ENCODE measurements at regions of chr7 and their contacts with region 1.

Region 1: DNA sequence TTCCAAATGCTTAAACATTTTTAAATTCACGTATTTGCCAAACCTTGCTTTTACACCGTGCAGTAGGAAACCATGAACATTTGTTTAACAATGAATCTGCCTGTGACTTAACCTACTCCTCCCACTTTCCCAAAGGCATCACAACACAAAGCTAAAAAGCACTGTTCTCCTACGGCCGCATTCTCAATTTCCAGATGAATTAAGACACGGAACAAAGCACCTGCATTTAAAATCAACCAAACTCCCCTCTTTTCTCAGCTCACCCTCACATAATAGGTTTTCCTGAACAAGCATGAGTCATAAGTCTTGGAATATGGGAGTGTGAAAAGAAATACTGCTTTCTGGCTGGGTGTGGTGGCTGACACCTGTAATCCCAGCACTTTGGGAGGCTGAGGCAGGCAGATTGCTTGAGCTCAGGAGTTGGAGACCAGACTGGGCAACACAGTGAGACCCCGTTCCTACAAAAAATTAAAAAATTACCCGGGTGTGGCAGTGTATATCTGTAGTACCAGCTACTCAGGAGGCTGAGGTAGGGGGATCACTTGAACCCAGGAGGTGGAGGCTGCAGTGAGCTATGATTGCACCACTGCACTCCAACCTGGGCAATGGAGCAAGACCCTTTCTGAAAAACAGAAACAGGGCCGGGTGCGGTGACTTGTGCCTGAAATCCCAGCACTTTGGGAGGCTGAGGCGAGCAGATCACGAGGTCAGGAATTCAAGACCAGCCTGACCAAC is 51.7 kb upstream of the CYTH3 start:
- DNase-seq: no peak
- ATAC-seq: no peak

Region 2: GRCh38 chr7:5997222-5997808 is 326.8 kb before region 1 on chr7:
- intact Hi-C with region 1: loop called (anchors 10 kb)
- DNase-seq: no peak
- ATAC-seq: peak; percentile 71

Region 3: GRCh38 chr7:6160191-6160623 is 163.9 kb before region 1 on chr7:
- intact Hi-C with region 1: loop called (anchors 5 kb)
- DNase-seq: peak; percentile 81
- ATAC-seq: peak; percentile 75

Region 4: DNA sequence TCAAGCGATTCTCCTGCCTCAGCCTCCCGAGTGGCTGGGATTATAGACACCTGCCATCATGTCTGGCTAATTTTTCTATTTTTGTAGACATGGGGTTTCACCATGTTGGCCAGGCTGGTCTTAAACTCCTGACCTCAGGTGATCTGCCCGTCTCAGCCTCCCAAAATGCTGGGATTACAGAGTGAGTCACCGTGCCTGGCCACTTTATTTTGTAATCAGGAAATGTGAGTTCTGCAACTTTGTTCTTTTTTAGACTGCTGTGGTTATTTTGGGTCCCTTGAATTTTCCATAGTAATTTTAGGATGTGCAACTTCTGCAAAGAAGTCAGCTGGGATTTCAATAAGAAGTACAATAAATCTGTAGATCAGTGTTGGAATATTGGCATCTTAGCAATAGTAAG is 148.5 kb before region 1 on chr7:
- intact Hi-C with region 1: no loop called
- DNase-seq: no peak
- ATAC-seq: no peak

Region 5: DNA sequence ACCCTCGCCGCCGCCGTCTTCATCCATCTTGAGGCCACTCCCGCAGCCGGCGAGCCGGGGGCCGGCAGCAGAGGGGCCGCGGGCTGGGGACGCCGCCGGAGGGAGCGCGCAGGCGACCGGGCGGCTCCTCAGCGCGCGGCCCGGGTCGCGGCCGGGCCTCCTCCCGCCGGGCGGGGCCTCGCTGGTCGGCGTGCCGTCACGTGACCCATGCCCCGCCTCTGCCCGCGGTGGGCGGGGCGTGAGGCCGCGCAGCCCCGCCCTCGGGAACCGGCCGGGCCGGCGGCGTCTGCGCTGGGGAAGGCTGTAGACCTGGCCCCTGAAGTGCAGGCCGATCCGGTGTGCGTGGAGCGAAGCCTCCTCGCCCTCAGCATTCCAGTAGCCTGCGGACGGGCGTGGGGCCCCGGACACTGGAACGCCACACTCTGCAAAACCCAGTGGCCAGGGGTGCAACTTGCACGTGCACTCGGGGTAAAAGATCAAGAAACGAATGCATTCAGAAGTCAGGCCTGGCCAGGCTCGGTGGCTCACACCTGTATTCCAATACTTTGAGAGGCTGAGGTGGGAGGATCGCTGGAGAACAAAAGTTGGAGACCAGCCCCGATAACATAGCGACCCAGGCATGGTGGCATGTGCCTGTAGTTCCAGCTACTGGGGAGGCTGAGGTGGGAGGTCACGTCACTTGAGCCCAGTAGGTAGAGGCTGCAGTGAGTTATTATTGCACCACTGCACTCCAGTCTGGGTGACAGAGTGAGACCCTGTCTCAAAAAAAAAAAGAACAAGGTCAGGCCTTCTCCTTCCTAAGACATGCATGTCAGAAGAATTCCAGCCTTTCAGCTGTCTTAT is 51.4 kb before region 1 on chr7 and contains the start of gene CYTH3:
- intact Hi-C with region 1: loop called (anchors 5 kb)
- DNase-seq: peak; percentile 89
- ATAC-seq: peak; percentile 94
- total RNA-seq, gene CYTH3: 27.8 TPM

Region 6: DNA sequence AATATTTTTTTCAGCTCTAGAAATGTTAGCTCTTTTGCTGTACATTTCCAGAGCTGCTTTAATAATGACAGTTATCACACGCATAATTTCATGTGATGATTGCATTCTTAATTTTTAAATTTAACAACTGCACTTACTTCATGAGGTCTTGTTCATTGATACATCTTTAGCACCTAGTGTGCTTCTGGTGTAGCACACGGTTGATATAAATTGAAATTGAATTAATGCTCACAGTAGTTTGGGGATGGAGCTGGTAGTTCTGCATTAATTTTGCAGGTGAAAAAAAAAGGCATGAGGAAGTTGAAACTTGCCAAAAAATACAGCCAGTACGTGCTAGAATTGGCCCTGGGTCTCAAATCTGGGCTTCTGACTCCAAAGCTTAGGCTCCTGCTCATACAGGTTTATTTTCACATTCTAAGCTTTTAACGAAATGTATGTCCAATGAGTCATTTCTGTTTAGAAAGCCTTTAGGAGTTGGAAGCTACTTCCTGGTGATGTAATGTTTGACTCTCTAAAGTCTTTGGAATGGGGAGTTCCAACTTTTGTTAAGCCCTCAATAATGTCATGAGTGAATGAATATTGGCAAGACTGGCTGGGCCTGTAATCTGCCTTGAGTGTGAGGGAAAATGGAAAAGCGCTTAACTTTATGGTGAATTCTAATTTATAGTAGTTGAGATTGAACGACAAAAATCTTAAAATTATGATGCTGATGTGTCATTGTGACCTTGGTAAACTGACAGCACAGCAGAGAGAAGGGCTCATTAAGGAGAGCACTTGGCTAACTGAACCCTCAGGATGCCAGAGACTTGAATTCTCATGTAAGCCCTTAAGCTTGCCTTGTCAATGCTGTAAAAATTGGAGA is 61.2 kb after region 1 on chr7:
- intact Hi-C with region 1: no loop called
- DNase-seq: no peak
- ATAC-seq: peak; percentile 61